AG04449 (cell line): ENCODE measurements at regions of chr22 and their contacts with region 1.

Region 1: DNA sequence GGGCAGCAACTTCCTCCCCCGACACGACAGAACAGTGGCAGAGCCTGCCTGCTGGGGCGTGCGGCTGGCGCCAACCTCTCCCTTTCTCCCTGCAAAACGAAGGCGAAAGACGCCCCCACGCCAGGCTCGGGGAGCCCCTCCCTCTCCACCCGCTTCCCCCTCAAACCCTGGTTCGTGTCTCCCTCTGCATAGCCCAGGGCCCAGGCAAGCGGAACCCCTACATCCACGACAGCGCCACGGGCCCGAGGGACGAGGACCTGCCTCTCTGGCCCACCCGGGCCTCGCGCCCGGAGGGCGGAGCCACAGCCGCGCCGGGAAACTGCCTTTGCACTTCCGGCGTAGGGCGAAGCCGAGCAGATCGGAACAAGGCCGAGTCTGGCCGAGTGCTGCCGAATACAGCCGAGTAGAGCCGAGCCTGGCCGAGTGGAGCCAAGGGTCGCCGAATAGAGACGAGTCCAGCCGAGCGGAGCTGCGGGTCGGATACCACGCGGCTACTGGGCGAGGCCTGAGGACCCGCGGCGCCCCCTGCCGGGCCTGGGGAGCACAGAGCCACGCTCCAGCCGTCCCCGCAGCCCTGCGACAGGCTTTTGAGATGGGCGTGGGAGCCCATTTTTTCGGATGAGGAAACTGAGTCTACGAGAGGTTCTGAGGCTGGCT is 11.2 kb upstream of the C1QTNF6 start:
- DNase-seq: peak; percentile 76
- H3K4me3 ChIP-seq: peak overlapping the region; percentile 78
- CTCF ChIP-seq: peak; percentile 99

Region 2: DNA sequence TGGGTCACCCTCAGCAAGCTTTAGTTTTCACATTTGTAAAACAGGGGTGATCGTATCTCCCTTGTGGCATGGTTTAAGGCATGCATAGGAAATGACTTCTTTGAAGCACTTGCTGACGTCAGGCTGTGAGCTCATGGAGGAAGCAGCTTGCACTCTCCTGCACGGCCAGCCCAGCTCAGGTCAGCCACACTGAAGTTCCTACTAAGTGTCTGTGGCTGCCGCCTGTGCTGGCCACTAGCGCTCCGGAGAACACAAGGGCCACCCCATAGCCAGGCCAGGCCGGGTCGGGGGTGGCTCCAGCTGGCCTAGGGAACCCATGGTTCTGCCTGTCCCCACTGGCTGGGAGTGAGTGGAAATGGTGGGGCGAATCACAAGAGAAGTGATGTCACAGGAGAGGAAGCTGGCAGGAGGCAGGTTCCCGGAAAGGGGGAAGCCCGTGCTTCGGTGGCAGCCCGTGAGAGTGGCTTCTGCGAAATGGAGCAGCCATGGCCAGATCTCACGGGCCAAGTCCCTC is 119.5 kb before region 1 on chr22:
- CTCF ChIA-PET with region 1: interaction called, 26 read pairs
- POLR2A ChIA-PET with region 1: no interaction called
- DNase-seq: no peak
- H3K4me3 ChIP-seq: no peak overlapping the region
- CTCF ChIP-seq: no peak

Region 3: GRCh38 chr22:37166675-37167066 is 32.6 kb before region 1 on chr22:
- CTCF ChIA-PET with region 1: interaction called, 199 read pairs
- POLR2A ChIA-PET with region 1: no interaction called
- DNase-seq: no peak
- H3K4me3 ChIP-seq: no peak overlapping the region
- CTCF ChIP-seq: peak; percentile 93

Region 4: DNA sequence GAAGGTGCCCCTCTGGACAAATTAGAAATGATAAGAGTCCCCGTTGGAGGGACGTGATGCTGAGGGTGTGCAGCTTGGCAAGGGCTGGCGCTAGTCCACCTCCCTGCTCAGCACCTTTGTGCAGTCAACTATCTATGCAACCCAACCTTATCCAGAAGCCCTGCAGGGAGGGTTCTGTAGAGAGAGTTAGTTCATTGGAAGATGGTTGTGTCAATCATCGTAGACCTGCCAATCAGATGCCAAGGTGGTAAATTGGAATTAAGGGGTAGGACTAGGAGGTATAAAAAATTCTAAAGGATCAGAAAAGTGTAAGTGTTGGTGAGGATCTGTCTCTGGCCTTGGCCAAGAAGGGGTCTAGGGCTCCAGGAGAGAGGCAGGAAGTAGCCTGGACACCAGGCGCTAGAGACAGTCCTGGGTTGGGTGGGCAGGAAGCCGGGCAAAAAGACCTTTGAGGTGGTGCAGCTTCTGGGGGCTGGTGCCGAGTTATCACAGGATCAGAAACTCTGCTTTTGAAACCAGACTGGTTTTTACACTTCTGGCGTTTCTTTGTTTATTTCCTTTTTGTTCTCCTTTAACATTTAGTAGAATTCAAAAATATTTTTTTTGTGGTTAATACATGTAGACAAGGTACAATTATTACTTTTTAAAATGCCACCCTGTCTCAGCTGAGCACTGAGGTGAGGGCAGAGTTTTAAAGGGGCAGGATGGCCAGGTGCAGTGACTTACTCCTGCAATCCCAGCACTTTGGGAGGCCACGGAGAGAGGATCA is 12.8 kb before region 1 on chr22:
- CTCF ChIA-PET with region 1: interaction called, 72 read pairs
- POLR2A ChIA-PET with region 1: interaction called, 3 read pairs
- DNase-seq: no peak
- H3K4me3 ChIP-seq: no peak overlapping the region
- CTCF ChIP-seq: no peak

Region 5: DNA sequence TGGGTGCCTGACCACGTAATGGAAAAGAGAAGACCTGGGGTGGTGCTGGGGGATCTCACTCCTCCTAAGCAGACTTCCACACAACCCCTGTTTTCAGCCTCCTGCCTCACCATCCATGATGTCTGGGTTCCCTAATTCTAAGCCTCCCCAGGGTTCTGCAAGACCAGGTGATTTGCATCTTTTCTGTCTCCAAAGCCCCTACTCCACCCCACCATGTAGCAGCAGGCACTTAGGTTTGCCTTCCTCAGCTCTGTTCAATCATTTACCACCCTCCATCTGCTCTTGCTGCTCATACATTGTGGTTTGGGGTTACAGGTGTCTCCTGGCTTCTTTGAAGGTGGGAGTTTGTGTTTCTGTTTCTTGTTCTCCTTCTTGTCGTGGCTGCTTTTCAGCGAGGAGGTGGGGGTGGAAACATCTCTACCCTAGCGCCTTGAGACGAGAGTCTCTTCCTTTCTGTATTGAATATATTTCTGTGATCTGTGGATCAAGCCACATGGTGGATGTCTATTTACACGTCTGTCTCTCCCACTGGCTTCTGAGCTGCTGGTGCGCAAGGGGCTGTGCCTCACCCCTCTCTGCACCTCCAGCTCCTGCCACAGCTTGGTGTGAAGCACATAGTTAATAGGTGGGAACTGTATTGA is 19.7 kb after region 1 on chr22:
- CTCF ChIA-PET with region 1: interaction called, 61 read pairs
- POLR2A ChIA-PET with region 1: interaction called, 4 read pairs
- DNase-seq: no peak
- H3K4me3 ChIP-seq: no peak overlapping the region
- CTCF ChIP-seq: no peak

Region 6: DNA sequence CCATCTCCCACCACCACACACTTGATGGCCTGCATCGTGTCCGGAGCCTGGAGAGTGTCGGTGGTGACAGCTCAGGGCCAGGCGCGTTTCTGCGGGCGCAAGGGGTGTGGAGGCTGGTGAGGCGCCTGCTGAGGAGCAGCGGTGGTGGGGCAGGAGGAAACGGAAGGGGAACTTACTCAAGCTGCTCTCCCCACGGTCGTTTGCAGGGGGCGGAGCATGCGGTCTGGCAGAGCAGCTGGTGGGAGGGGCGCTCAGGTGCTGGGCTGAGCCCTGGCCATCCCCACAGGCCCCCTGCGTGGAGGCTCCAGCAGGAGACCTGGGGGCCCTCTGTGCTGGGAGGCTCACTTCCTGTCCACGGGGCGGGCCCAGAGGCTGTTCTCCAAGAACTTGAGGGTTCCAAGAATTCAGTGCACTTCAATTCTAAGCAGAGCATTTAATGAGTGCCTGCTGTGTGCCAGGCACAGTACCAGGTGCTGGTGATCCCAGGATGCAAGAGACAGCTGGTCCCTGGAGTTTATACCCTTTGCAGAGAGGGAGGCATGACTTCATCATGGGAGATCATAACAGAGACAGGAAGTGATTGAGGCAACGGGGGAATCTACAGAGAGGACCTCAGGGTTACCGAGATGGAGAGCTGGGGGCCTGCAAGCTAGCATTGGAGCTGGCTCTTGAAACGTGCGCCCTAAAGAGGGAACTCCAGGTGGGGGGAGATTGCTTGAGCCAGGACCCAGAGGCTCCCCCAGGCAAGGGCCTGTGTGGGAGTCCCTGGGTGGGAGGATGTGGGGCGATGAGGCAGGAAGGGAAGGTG is 45.1 kb after region 1 on chr22 and contains the start of gene RAC2:
- CTCF ChIA-PET with region 1: interaction called, 46 read pairs
- POLR2A ChIA-PET with region 1: no interaction called
- DNase-seq: no peak
- H3K4me3 ChIP-seq: peak within 1 kb of the TSS; percentile 60
- CTCF ChIP-seq: no peak

Region 7: DNA sequence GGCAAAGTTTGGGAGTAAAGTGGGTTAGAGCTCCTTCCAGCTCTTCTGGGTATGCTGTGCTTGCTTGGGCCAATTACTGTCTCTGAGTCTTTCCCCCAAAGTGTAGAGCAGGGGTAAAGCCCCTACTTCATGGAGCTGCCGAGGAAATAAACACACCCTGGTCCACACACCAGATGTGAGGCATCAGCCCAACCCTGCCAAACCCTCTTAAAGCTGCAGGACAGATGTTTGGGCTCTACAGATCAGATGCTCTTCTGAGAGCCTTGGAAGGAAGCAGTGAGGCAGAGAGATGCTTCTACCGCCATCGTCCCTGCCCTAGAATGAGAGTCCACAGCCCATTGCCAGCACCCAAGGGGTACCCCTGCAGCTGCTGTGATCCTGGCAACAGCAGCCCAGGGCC is 163.4 kb after region 1 on chr22:
- CTCF ChIA-PET with region 1: no interaction called
- POLR2A ChIA-PET with region 1: no interaction called
- DNase-seq: no peak
- H3K4me3 ChIP-seq: no peak overlapping the region
- CTCF ChIP-seq: no peak